PC-3 (cell line): ENCODE measurements at regions of chr2 and their contacts with region 1.

Region 1: DNA sequence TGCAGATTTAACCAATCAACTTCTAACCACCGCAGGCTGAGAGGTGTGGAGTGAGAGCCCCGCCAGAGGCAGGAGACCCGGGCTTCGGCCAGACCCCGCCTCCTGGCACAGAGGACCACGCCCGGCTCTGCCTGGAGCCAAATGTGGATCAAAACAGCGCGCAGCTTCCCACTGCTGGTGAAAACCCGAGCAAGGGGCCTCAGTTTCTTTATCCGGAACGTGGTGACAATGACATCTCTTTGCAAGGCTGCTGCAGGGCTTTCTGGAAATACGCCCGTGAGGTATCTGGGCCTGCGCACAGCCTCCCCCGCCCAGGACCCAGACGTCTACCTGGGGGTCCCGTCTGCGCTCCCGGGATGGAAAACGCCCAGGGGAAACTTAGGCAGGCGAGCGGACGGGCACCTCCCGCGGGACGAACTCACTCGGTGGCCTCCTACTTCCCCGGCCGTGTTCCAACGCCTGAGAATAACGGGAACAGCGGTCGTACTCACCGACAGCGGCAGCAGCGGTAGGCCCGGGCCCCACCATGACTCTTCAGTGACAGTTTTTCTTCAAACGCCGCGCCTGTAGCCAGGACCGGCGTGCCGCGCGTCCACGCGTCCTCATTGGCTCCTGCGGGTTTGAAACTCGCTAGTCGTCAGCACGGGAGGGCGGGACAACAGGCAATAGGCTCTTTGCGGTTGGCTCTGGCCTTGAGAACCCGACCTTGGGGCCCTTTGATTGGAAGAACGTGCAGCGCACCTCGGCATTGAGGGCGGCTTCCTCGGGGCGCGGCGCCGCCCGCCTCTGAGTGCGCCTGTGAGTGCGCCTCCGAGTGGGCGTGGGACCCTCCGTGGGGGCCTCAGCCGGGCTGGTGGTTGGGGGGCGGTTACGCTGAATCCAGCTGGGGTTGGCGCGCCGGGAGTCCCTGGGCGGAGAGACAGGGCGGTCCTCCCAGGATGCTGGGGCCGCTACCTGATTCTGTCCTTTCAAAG is at the start of gene CKAP2L:
- DNase-seq: peak; percentile 99
- ATAC-seq: peak; percentile 92
- H3K4me3 ChIP-seq: peak within 1 kb of the TSS; percentile 92
- H3K27ac ChIP-seq: peak within 1 kb of the TSS; percentile 74
- H3K4me1 ChIP-seq: peaks cover 43% of the 10 kb centered on the region
- H3K27me3 ChIP-seq: no peaks in the 10 kb centered on the region
- CTCF ChIP-seq: no peak; the same call in 1 of the 2 replicates
- total RNA-seq, gene CKAP2L: 16.0 and 20.7 TPM in 2 replicates

Region 2: DNA sequence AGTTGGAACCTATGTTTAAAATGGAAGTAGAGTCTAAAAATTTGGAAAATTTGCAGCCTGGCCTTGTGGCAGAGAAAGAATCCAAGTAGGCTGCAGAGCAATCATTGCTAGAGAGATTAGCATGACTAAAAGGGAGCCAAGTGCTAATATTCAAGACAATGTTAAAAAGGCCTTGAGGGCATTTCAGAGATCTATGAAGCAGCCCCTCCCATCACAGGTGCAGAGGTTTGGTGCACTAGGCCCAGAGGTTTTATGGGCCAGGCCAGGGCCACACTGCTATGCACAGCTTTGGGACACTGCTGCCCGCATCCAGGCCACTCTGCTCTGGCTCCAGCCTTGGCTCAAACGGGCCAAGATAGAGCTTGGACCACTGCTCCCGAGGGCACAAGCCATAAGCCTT is 26.7 kb after region 1 on chr2:
- CTCF ChIA-PET with region 1: no interaction called
- POLR2A ChIA-PET with region 1: interaction called, 28 read pairs
- intact Hi-C with region 1: no loop called
- DNase-seq: no peak
- ATAC-seq: no peak
- H3K4me3 ChIP-seq: no peak overlapping the region
- H3K27ac ChIP-seq: no peak overlapping the region
- H3K4me1 ChIP-seq: peaks cover 38% of the 10 kb centered on the region
- H3K27me3 ChIP-seq: no peaks in the 10 kb centered on the region
- CTCF ChIP-seq: no peak

Region 3: DNA sequence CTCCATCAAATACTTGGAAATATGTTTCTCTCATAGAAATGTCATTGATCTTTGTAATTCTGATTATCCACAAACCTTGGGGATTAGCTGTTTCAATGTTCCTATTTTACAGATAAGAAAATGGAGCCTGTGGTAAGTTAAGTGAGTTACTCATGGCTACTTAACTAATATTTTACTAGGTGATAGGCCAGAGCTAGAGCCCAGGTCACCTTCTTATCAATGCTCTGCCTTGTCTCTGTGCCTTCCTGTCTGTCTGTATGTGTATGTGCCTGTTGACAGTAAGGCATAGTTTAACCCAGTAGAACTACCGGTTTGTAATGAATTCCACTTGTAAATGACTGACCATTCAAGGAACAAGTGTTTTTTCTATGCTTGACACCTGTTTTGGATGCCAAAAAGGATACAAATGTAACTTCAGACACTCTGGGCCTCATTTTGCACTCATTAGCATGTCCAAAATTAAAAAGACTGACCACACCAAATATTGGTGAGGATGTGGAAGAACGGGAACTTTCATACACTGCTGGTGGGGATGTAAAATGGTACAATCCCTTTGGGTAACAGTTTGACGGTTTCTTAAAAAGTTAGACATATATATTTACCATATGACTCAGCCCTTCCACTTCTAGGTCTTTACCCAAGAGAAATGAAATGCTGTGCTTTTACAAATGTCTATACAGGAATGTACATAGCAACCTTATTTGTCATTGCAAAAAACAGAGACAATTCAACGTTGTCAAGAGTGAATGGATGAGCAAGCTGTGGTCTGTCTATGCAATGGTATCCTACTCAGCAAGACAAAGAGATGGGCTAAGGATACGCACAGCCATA is 39.5 kb after region 1 on chr2:
- CTCF ChIA-PET with region 1: no interaction called
- POLR2A ChIA-PET with region 1: no interaction called
- intact Hi-C with region 1: loop called (anchors 1 kb)
- DNase-seq: peak; percentile 96
- ATAC-seq: peak; percentile 98
- H3K4me3 ChIP-seq: peak overlapping the region; percentile 19; the same call in 1 of the 2 replicates
- H3K27ac ChIP-seq: peak overlapping the region; percentile 93
- H3K4me1 ChIP-seq: peaks cover 26% of the 10 kb centered on the region
- H3K27me3 ChIP-seq: no peaks in the 10 kb centered on the region
- CTCF ChIP-seq: no peak

Region 4: GRCh38 chr2:112869258-112869885 is 105.0 kb after region 1 on chr2:
- CTCF ChIA-PET with region 1: no interaction called
- POLR2A ChIA-PET with region 1: no interaction called
- intact Hi-C with region 1: loop called (anchors 1 kb)
- DNase-seq: peak; percentile 98
- ATAC-seq: peak; percentile 94
- H3K4me3 ChIP-seq: peak overlapping the region; percentile 13; the same call in 1 of the 2 replicates
- H3K27ac ChIP-seq: peak overlapping the region; percentile 86
- H3K4me1 ChIP-seq: peaks cover 24% of the 10 kb centered on the region
- H3K27me3 ChIP-seq: no peaks in the 10 kb centered on the region
- CTCF ChIP-seq: no peak

Region 5: DNA sequence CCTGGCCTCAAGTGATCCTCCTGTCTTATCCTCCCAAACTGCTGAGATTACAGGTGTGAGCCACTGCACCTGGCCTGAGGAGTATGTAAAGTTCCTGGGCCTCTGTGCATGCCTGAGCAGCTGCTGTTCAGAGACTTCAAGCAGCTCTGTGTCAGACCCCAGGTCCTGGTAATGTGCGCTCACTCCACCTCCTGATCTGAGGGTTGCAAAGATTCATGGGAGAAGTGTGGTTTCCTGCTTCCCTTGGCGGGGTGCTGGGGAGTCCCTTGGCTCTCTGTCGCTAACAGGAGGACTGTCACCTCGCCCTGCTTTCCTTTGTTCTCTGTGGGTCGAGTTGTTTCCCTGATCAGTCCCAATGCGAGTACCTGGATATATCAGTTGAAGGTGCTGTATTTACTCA is 232.3 kb after region 1 on chr2:
- CTCF ChIA-PET with region 1: no interaction called
- POLR2A ChIA-PET with region 1: no interaction called
- intact Hi-C with region 1: no loop called
- DNase-seq: no peak
- ATAC-seq: no peak
- H3K4me3 ChIP-seq: no peak overlapping the region
- H3K27ac ChIP-seq: no peak overlapping the region
- H3K4me1 ChIP-seq: no peaks in the 10 kb centered on the region
- H3K27me3 ChIP-seq: no peaks in the 10 kb centered on the region
- CTCF ChIP-seq: no peak